Left cardiac atrium (tissue), 4 donors: ENCODE measurements at regions of chr15 and their contacts with region 1.

Region 1: GRCh38 chr15:44728576-44729407 is 7.5 kb upstream of the TRIM69 start:
- DNase-seq: peak; percentile 96
- ATAC-seq: peak; percentile 96

Region 2: DNA sequence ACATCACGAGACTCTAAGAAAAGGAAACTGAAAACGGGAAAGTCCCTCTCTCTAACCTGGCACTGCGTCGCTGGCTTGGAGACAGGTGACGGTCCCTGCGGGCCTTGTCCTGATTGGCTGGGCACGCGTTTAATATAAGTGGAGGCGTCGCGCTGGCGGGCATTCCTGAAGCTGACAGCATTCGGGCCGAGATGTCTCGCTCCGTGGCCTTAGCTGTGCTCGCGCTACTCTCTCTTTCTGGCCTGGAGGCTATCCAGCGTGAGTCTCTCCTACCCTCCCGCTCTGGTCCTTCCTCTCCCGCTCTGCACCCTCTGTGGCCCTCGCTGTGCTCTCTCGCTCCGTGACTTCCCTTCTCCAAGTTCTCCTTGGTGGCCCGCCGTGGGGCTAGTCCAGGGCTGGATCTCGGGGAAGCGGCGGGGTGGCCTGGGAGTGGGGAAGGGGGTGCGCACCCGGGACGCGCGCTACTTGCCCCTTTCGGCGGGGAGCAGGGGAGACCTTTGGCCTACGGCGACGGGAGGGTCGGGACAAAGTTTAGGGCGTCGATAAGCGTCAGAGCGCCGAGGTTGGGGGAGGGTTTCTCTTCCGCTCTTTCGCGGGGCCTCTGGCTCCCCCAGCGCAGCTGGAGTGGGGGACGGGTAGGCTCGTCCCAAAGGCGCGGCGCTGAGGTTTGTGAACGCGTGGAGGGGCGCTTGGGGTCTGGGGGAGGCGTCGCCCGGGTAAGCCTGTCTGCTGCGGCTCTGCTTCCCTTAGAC is 17.3 kb before region 1 on chr15 and contains the start of gene B2M:
- intact Hi-C with region 1: loop called in 1 of 2 experiments (anchors 1 kb)
- DNase-seq: peak; percentile 96
- ATAC-seq: peak; percentile 95 to 96
- total RNA-seq, gene B2M: 1,362 to 1,570 TPM

Region 3: DNA sequence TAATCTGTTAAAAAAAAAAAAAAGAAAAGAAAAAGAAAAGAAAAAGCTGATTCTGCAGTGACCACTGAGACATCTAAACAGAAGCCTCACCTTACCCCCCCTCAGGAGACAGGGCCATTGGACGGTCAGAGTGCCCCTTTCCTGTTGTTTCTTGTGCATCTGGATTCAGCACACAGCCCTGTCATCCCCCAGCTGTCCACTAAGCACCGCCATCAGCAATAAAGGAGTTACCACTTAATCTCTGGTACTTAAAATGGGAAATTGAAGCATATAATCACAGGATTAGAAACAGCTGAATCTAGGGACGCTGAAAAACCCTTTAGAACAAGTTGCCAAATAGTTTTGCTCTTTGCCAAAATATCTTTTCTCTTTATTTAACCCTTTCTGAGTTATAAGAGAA is 70.0 kb after region 1 on chr15:
- intact Hi-C with region 1: no loop called
- DNase-seq: no peak
- ATAC-seq: no peak